Gastrocnemius medialis (tissue), 4 donors: ENCODE measurements at regions of chr7 and their contacts with region 1.

Region 1: DNA sequence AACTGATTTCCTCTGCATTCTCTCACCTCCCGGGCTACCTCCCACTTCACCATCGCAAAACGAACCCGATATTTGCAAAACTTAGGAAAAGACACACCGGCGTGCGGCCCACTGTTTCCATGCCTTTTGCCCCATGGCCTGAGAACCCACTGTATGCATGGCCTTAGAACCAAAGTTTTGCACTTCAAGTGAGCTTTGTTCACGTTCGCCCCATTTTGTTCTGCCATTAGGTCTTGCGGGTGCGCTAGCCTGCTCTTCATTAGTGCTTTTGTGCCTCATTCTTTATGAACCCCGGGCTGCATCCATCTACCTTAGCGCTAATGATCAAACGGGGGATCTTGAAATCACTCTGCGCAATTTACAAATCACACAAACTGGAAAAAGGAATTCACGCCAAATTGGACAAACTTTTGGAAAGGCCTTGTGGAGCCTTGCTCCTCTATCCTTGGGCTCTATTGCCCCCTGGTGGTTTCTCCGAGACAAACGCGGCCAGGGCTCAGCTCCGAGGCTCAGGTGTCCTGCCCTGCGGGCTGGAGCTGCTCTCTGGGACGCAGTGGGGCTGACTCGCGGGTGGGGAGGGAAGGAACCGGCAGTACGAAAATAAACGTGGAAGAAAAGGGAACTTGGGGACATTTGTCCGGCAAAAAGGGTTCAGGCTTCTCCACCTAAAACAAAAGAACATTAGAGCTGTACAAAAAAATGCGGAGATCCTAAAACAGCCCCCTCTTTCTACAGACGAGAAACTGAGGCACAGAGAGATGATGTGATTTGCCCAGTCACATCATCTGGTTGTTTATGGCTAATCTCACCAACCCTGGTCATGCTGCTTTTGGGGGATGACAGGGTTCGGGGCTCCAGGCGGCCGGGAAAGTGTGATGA is 300.4 kb upstream of the NFE2L3 start:
- DNase-seq: peak; percentile 81 to 86
- ATAC-seq: peak; percentile 33 to 42
- H3K4me3 ChIP-seq: peak overlapping the region in 1 of 4 donors; percentile 27
- H3K27ac ChIP-seq: peak overlapping the region; percentile 47 to 90 (median 88)
- H3K4me1 ChIP-seq: peaks cover 55 to 62% of the 10 kb centered on the region in 2 donors
- H3K27me3 ChIP-seq: no peaks in the 10 kb centered on the region
- CTCF ChIP-seq: peak; percentile 86 to 93 (median 91)
- POLR2A ChIP-seq: no peak

Region 2: DNA sequence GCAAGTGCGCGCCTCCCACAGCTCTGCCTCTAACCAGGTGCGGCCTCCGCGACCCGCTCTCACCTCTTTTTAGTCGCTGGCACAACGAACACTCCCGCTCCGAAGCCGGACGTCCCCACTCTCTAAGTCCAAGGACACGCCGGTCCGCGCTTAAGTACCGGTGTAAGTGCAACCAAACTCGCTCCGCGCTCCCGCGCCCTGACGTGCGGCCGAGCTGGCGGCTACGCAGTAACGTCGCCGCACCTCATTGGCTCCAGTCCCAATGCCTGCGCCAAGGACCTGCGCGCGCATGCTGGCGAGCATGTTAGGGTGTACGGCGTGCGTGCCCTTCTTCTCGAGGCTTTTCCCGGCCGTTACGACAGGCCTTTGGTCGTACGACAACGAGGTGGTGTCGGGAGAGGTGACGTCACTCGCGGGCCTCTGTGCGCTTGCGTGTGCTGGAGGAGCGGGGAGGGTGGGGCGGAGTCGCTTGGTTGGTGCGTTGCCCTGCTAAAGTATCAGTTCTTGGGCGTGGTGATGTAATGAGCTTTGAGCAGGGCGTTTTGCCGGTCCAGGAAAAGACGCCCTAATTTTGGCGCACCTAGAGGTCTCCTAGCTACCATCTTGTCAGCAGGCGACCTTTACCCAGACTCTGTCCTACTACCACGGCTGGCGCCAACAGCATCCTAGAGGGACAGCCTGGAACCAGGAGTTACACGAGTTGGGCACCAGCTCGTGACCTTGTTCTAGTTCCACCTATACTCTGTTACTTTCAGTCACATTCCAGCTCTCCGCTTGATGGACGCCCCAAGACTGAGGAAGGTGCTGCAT is 726.2 kb before region 1 on chr7 and contains the start of gene CYCS:
- in situ Hi-C with region 1: no loop called
- intact Hi-C with region 1: loop called (anchors 10 kb)
- DNase-seq: peak; percentile 99
- ATAC-seq: peak; percentile 94 to 95
- H3K4me3 ChIP-seq: peak within 1 kb of the TSS; percentile 63 to 96 (median 92)
- H3K27ac ChIP-seq: peak within 1 kb of the TSS; percentile 91 to 99 (median 98)
- H3K4me1 ChIP-seq: peaks cover 24% of the 10 kb centered on the region in 2 donors
- H3K27me3 ChIP-seq: no peaks in the 10 kb centered on the region
- CTCF ChIP-seq: peak in 1 of 5 experiments; percentile 12
- POLR2A ChIP-seq: peak; percentile 96 to 99
- total RNA-seq, gene CYCS: 97.9 to 186 (median 109) TPM

Region 3: GRCh38 chr7:25389489-25390106 is 462.0 kb before region 1 on chr7:
- in situ Hi-C with region 1: loop called (anchors 5 to 10 kb)
- intact Hi-C with region 1: loop called (anchors 1 kb)
- DNase-seq: no peak
- ATAC-seq: no peak
- H3K4me3 ChIP-seq: no peak overlapping the region
- H3K27ac ChIP-seq: no peak overlapping the region
- H3K4me1 ChIP-seq: no peaks in the 10 kb centered on the region
- H3K27me3 ChIP-seq: no peaks in the 10 kb centered on the region
- CTCF ChIP-seq: peak in 2 of 5 experiments; percentile 29 to 39
- POLR2A ChIP-seq: no peak

Region 4: GRCh38 chr7:25565949-25566348 is 285.6 kb before region 1 on chr7:
- in situ Hi-C with region 1: loop called in 3 of 4 experiments (anchors 5 to 10 kb)
- intact Hi-C with region 1: loop called (anchors 1 kb)
- DNase-seq: peak; percentile 38 to 49
- ATAC-seq: peak; percentile 40 to 76
- H3K4me3 ChIP-seq: peak overlapping the region in 1 of 4 donors; percentile 30
- H3K27ac ChIP-seq: no peak overlapping the region
- H3K4me1 ChIP-seq: peaks cover 13 to 21% of the 10 kb centered on the region in 2 donors
- H3K27me3 ChIP-seq: no peaks in the 10 kb centered on the region
- CTCF ChIP-seq: peak; percentile 91 to 100 (median 99)
- POLR2A ChIP-seq: no peak

Region 5: DNA sequence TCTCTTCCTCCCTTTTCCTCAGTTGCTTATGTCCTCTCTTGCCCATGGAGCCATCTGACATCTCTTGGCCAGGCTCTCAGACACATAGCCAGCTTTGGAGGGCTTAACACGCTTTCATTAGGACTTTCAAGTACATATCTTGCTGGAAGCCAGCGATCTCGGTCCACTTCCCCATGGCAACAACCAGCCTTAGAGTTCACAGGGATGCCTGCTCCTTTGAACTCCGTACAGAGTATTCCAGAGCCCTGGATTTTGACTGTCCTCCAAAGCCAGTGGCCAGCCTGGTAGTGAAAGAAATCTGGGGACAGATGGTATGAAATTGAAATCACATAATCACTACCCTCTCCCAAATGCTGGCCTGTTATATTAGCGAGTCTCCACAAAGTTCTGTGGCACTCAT is 252.8 kb before region 1 on chr7:
- in situ Hi-C with region 1: no loop called
- intact Hi-C with region 1: no loop called
- DNase-seq: no peak
- ATAC-seq: no peak
- H3K4me3 ChIP-seq: no peak overlapping the region
- H3K27ac ChIP-seq: no peak overlapping the region
- H3K4me1 ChIP-seq: peaks cover 0 to 13% of the 10 kb centered on the region in 2 donors
- H3K27me3 ChIP-seq: no peaks in the 10 kb centered on the region
- CTCF ChIP-seq: no peak
- POLR2A ChIP-seq: no peak

Region 6: DNA sequence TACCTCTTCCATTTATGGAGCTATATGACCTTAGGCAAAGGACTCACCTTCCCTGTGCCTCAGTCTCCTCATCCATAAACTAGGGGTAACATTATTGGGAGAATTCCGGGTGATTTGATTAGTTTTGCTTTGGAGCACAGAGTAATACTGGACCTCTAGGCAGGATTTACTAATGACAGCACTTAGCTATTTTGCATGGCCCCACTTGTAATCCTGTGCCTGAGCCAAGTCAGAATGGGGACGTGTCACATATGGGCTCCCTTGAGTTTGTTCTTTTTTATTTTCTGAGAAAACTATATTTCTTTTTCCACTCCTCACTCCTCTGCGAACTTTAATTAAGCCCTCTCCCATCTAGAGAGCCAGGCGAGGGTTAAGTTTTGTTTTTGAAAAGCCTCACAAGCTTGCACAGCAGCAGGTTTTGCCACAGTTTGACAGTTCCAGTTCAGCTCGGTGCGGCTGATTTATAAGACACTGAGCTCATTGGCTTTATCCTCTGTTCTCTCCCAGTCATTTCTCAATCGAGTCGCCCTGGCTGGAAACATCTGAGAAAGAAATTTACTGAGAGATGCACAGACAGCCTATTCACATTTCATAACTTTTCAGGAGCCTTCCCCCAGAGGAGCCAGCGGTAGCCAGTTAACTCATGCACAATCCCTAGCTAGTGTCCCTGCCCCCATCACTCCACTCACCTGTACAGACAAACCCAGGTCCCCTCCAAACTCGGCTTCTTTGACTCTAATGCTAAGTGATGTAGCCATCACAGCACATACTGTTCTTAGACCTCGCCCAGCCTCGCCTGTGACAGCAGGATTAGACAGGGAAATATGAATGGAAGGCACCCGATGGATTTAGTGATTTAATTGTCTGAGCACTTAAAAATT is 181.4 kb before region 1 on chr7:
- in situ Hi-C with region 1: no loop called
- intact Hi-C with region 1: loop called (anchors 2 kb)
- DNase-seq: peak; percentile 71 to 77
- ATAC-seq: peak; percentile 94 to 95
- H3K4me3 ChIP-seq: peak overlapping the region in 1 of 4 donors; percentile 8
- H3K27ac ChIP-seq: peak overlapping the region; percentile 59 to 90 (median 70)
- H3K4me1 ChIP-seq: peaks cover 21 to 39% of the 10 kb centered on the region in 2 donors
- H3K27me3 ChIP-seq: no peaks in the 10 kb centered on the region
- CTCF ChIP-seq: no peak
- POLR2A ChIP-seq: no peak

Region 7: GRCh38 chr7:25752967-25753791 is 98.4 kb before region 1 on chr7:
- in situ Hi-C with region 1: loop called in 1 of 4 experiments (anchors 10 kb)
- intact Hi-C with region 1: no loop called
- DNase-seq: peak; percentile 59 to 60
- ATAC-seq: peak; percentile 51 to 68
- H3K4me3 ChIP-seq: no peak overlapping the region
- H3K27ac ChIP-seq: peak overlapping the region; percentile 86 to 94 (median 90)
- H3K4me1 ChIP-seq: peaks cover 38 to 61% of the 10 kb centered on the region in 2 donors
- H3K27me3 ChIP-seq: no peaks in the 10 kb centered on the region
- CTCF ChIP-seq: no peak
- POLR2A ChIP-seq: no peak

Region 8: GRCh38 chr7:27160546-27161213 is 1309.1 kb after region 1 on chr7:
- in situ Hi-C with region 1: loop called in 1 of 4 experiments (anchors 5 kb)
- intact Hi-C with region 1: no loop called
- DNase-seq: peak in 1 of 2 donors; percentile 85
- ATAC-seq: peak; percentile 32 to 47
- H3K4me3 ChIP-seq: peak overlapping the region; percentile 60 to 80 (median 72)
- H3K27ac ChIP-seq: peak overlapping the region; percentile 65 to 88 (median 81)
- H3K4me1 ChIP-seq: peaks cover 12 to 23% of the 10 kb centered on the region in 2 donors
- H3K27me3 ChIP-seq: no peaks in the 10 kb centered on the region
- CTCF ChIP-seq: peak; percentile 99 to 100 (median 100)
- POLR2A ChIP-seq: no peak